ENCODE measurements at regions of chr9 and their contacts with region 1.

Region 1: DNA sequence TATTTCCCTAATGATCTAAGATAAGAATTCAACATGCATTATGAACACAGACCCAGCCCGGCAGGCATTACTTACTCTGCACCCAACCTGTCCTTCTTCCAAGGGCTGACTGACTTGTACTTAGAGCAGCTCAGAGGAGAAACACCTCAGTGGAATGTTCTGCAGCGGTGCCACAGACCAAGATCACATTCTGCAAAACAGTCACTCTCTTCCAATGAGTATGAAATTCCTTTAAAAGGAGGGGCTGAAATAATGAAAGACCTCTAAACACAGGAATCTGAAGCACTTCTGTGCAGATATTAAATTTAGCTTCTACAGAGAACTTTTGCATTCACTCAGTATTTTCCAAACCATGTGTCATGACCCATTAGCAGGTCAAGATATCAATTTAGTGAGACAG is 172.9 kb downstream of the ZDHHC21 start:
- DNase-seq: no peak
- ATAC-seq: no peak
- H3K4me3 ChIP-seq: no peak overlapping the region
- H3K27ac ChIP-seq: no peak overlapping the region
- H3K4me1 ChIP-seq: no peaks in the 10 kb centered on the region
- H3K27me3 ChIP-seq: no peaks in the 10 kb centered on the region
- CTCF ChIP-seq: no peak

Region 2: GRCh38 chr9:13023462-13023861 is 1496.9 kb before region 1 on chr9:
- CTCF ChIA-PET with region 1: no interaction called
- POLR2A ChIA-PET with region 1: no interaction called
- intact Hi-C with region 1: no loop called
- DNase-seq: peak; percentile 89
- ATAC-seq: peak; percentile 97
- H3K4me3 ChIP-seq: no peak overlapping the region
- H3K27ac ChIP-seq: peak overlapping the region; percentile 39
- H3K4me1 ChIP-seq: peaks cover 18% of the 10 kb centered on the region
- H3K27me3 ChIP-seq: no peaks in the 10 kb centered on the region
- CTCF ChIP-seq: no peak

Region 3: DNA sequence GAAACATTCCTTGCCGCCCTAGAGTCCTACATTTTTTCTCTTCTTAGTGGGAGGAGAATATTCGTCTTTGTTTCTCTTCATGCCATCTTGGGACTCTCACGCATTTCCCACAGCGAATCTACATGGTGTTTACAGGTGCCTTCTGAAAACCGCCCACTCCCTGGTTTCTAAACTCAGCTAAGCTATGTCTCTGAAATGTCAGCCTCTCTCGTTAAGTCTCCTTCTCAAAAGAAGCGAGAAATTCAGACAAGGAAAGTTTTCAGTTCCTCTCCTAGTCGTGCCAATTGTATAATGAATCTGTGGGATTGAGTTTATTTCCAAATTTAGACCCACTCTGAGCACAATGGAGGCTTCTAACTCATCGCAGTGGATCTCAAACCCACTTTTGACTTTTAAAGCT is 19.6 kb before region 1 on chr9:
- CTCF ChIA-PET with region 1: no interaction called
- POLR2A ChIA-PET with region 1: no interaction called
- intact Hi-C with region 1: loop called (anchors 1 kb)
- DNase-seq: no peak
- ATAC-seq: no peak
- H3K4me3 ChIP-seq: no peak overlapping the region
- H3K27ac ChIP-seq: no peak overlapping the region
- H3K4me1 ChIP-seq: no peaks in the 10 kb centered on the region
- H3K27me3 ChIP-seq: 0 out of 2 replicates have a peak, but pooled peaks cover 10% of the 10 kb centered on the region
- CTCF ChIP-seq: no peak